Panc1 (cell line): ENCODE measurements at regions of chr1 and their contacts with region 1.

Region 1: GRCh38 chr1:151762941-151763921 is at the start of gene MRPL9:
- DNase-seq: no peak
- ATAC-seq: peak; percentile 100
- H3K4me3 ChIP-seq: peak within 1 kb of the TSS; percentile 78 to 85
- H3K27ac ChIP-seq: peak within 1 kb of the TSS; percentile 99
- H3K4me1 ChIP-seq: peaks cover 13% of the 10 kb centered on the region
- H3K27me3 ChIP-seq: no peaks in the 10 kb centered on the region
- CTCF ChIP-seq: no peak
- total RNA-seq, gene MRPL9: 98.3 TPM

Region 2: GRCh38 chr1:151327223-151327902 is 435.9 kb before region 1 on chr1 and contains the start of gene PI4KB:
- CTCF ChIA-PET with region 1: interaction called, 10 read pairs
- POLR2A ChIA-PET with region 1: interaction called, 3 read pairs
- in situ Hi-C with region 1: no loop called
- intact Hi-C with region 1: no loop called
- DNase-seq: peak; percentile 96
- ATAC-seq: peak; percentile 97
- H3K4me3 ChIP-seq: peak within 1 kb of the TSS; percentile 79 to 82
- H3K27ac ChIP-seq: peak within 1 kb of the TSS; percentile 97
- H3K4me1 ChIP-seq: peaks cover 15% of the 10 kb centered on the region
- H3K27me3 ChIP-seq: no peaks in the 10 kb centered on the region
- CTCF ChIP-seq: no peak
- total RNA-seq, gene PI4KB: 52.7 TPM

Region 3: DNA sequence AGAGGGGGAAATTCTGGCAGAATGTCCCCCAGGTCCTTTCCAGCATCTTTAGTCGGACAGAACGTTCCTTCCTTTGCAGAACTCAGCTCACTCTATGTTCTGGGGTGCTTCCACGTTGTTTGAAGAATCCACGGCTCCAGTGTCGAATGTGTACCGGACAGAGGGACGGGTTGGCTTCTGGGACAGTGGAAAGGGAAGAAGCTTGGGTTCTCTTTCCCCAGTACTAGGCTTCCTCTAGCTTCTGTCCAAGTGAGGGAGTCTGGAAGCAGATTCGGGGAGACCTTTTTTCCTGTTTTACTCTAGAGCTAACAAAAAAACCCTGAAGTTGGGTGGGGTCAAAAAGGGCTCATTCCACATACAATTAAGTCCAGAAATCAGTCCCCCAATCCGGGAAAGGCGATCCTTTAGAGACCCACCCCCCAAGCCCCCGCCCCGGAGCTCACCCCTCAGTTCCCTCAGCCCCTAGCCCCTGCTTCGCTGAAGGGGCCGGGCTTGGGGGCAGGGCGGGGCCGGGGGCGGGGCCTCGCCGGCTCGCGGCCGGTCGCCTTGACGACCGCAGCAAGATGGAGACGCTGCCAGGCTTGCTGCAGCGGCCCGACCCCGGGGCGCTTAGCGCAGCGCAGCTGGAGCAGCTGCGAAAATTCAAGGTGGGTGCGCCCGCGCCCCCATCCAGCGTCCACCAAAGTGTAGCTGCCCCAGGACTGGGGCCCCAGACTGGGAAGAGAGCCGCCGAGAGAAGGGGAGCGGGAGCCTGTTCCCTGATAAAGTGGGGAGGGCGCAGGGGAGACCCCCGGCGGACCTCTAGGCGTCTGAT is 42.0 kb before region 1 on chr1 and contains the start of gene RIIAD1:
- CTCF ChIA-PET with region 1: no interaction called
- POLR2A ChIA-PET with region 1: no interaction called
- in situ Hi-C with region 1: no loop called
- intact Hi-C with region 1: no loop called
- DNase-seq: no peak
- ATAC-seq: peak; percentile 85
- H3K4me3 ChIP-seq: peak within 1 kb of the TSS; percentile 47 to 61
- H3K27ac ChIP-seq: peak within 1 kb of the TSS; percentile 65
- H3K4me1 ChIP-seq: peaks cover 7% of the 10 kb centered on the region
- H3K27me3 ChIP-seq: peaks cover 10% of the 10 kb centered on the region
- CTCF ChIP-seq: no peak
- total RNA-seq, gene RIIAD1: not detected

Region 4: GRCh38 chr1:151783424-151784195 is 20.4 kb after region 1 on chr1:
- CTCF ChIA-PET with region 1: no interaction called
- POLR2A ChIA-PET with region 1: interaction called, 10 read pairs
- in situ Hi-C with region 1: no loop called
- intact Hi-C with region 1: loop called (anchors 2 kb)
- DNase-seq: no peak
- ATAC-seq: no peak
- H3K4me3 ChIP-seq: no peak overlapping the region
- H3K27ac ChIP-seq: no peak overlapping the region
- H3K4me1 ChIP-seq: peaks cover 6% of the 10 kb centered on the region; the same call in 1 of the 2 replicates
- H3K27me3 ChIP-seq: no peaks in the 10 kb centered on the region
- CTCF ChIP-seq: no peak

Region 5: DNA sequence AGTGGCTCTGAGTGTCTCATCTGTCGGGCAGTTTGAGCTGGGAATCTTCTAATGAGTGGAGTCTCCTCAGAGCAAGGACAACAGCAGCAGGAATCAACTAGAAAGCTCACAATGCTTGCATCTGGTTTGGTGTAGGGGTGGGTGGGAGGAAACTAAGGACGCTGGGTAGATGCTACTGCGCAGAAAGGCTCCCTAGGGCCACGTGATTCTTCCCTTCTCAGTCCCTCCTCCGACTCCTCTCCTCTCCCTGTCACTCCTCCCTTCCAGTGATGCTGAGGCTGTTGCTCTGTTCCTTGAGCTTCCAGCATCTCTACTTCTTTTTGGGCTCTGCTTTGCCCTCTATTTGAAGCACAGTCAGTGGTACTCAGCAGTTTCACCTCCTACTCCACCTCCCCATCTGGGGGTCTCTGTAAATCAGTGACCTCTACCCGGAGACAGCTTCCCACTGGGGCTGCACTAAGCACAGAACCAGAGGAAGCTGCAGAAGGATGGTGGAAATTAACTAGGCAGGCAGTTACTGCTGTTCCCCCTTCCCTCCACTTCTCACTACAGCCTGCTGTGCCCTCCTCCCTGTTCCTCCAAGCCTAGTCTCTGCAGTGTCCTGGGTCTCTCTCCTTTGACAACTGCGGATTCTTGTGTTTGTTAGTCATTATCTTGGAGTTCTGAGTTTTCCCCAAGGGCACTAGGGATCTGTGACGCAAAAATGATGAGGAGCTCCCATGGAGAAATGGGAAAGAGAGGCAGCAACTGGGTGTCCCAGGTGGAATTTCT is 36.1 kb after region 1 on chr1:
- CTCF ChIA-PET with region 1: no interaction called
- POLR2A ChIA-PET with region 1: interaction called, 17 read pairs
- in situ Hi-C with region 1: no loop called
- intact Hi-C with region 1: no loop called
- DNase-seq: no peak
- ATAC-seq: peak; percentile 47; the same call in 1 of the 2 replicates
- H3K4me3 ChIP-seq: no peak overlapping the region
- H3K27ac ChIP-seq: no peak overlapping the region
- H3K4me1 ChIP-seq: no peaks in the 10 kb centered on the region
- H3K27me3 ChIP-seq: no peaks in the 10 kb centered on the region
- CTCF ChIP-seq: no peak